HepG2 (cell line): ENCODE measurements at regions of chr2 and their contacts with region 1.

Region 1: DNA sequence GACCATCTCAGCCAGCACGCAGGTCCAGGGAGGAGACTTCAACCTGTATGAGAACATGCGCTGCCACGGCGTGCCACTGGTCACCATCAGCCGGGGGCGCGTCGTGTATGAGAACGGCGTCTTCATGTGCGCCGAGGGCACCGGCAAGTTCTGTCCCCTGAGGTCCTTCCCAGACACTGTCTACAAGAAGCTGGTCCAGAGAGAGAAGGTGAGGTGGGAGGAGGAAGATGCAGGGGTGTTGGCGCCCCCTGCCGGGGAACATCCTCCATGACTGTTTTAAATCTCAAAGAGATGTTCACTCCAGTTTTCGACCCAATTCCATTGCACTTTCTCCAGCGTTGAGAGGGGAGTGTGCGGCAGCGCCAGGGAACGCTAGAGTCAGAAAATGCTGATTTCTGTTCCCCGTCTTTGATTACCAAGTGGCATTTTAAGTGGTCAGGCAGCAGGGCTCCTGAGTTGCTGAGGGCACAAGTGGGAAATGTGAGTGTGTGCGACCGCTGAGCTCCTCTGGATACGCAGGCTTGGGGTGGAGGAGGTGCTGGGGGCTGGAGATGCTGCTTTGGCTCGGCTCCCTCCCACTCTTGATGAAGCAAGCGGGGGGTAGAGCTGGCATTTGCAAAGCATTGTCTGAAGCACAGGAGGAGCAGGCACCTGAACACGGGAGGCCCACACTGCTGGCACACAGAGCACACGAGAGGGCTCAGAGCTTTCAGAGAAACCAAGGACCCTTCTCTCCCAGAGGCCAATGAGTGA is 27.7 kb upstream of the MAPRE3 start:
- DNase-seq: peak; percentile 53
- ATAC-seq: peak; percentile 62
- H3K4me3 ChIP-seq: peak overlapping the region in 1 of 3 experiments; percentile 24; a peak in 1 of 6 replicates
- H3K27ac ChIP-seq: no peak overlapping the region
- H3K4me1 ChIP-seq: peaks cover 23% of the 10 kb centered on the region
- H3K27me3 ChIP-seq: peaks cover 10 to 65% of the 10 kb centered on the region in 2 experiments
- CTCF ChIP-seq: peak; percentile 97
- EP300 ChIP-seq: no peak
- POLR2A ChIP-seq: no peak
- RAD21 ChIP-seq: peak; percentile 88

Region 2: GRCh38 chr2:26846328-26847306 is 96.1 kb before region 1 on chr2:
- CTCF ChIA-PET with region 1: interaction called, 80 read pairs
- POLR2A ChIA-PET with region 1: interaction called, 5 read pairs
- in situ Hi-C with region 1: loop called (anchors 5 kb)
- intact Hi-C with region 1: loop called (anchors 1 kb)
- DNase-seq: peak; percentile 61
- ATAC-seq: peak; percentile 76
- H3K4me3 ChIP-seq: 0 out of 6 replicates have a peak overlapping the region, but pooled peaks of 2 of the 3 experiments have one; percentile 11 to 29
- H3K27ac ChIP-seq: no peak overlapping the region
- H3K4me1 ChIP-seq: peaks cover 13% of the 10 kb centered on the region
- H3K27me3 ChIP-seq: peaks cover 21 to 81% of the 10 kb centered on the region in 2 experiments
- CTCF ChIP-seq: peak; percentile 92
- EP300 ChIP-seq: no peak
- POLR2A ChIP-seq: no peak
- RAD21 ChIP-seq: peak; percentile 96

Region 3: GRCh38 chr2:26900831-26901321 is 41.8 kb before region 1 on chr2:
- CTCF ChIA-PET with region 1: no interaction called
- POLR2A ChIA-PET with region 1: no interaction called
- in situ Hi-C with region 1: no loop called
- intact Hi-C with region 1: loop called (anchors 1 kb)
- DNase-seq: no peak
- ATAC-seq: no peak
- H3K4me3 ChIP-seq: no peak overlapping the region
- H3K27ac ChIP-seq: no peak overlapping the region
- H3K4me1 ChIP-seq: no peaks in the 10 kb centered on the region
- H3K27me3 ChIP-seq: peaks cover 5 to 66% of the 10 kb centered on the region in 2 experiments
- CTCF ChIP-seq: no peak
- EP300 ChIP-seq: no peak
- POLR2A ChIP-seq: no peak
- RAD21 ChIP-seq: no peak

Region 4: DNA sequence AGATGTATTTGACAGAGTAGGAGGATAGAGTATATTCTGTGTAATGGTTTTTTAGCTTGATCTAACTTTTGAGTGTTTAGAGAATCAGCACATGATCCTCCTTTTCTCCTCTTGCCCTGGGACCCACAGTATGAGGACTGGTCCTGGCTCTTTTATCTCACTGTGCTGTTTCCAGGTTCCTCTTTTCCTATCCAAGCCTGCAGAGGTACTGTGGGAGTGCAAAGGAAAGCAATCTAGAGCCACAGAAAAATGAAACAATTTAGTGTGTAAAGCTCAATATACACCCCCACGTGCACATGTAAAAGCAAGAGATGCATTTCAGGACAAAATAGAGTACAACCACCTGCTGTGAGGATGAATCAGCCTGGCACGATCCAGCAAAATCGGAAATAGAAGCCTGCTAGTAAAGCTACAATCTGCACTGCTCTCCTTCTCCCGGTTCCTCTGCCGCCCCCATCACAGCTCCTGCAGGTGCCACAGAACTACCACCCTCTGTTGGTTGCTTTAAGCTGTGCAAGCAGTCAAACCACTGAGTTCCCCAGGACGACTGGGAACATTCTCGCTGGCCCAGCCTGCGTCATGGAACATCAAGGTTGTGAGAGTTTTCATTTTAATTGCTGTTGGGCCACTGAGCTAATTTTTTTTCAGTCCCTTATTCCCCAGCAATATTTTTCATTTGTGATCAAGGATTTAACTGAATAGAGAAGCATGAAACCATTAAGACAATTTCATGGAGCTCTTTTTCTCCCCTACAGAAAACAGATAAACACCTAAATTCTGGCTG is 20.1 kb before region 1 on chr2:
- CTCF ChIA-PET with region 1: interaction called, 4 read pairs
- POLR2A ChIA-PET with region 1: interaction called, 6 read pairs
- in situ Hi-C with region 1: no loop called
- intact Hi-C with region 1: loop called (anchors 1 kb)
- DNase-seq: peak; percentile 69
- ATAC-seq: peak; percentile 81
- H3K4me3 ChIP-seq: no peak overlapping the region; a peak in 1 of 6 replicates
- H3K27ac ChIP-seq: no peak overlapping the region
- H3K4me1 ChIP-seq: peaks cover 49% of the 10 kb centered on the region
- H3K27me3 ChIP-seq: peaks cover 0 to 26% of the 10 kb centered on the region in 2 experiments; a peak in 2 of 5 replicates
- CTCF ChIP-seq: peak; percentile 86
- EP300 ChIP-seq: no peak
- POLR2A ChIP-seq: no peak
- RAD21 ChIP-seq: peak; percentile 74

Region 5: GRCh38 chr2:26970244-26970920 is 27.7 kb after region 1 on chr2 and contains the start of gene MAPRE3:
- CTCF ChIA-PET with region 1: no interaction called
- POLR2A ChIA-PET with region 1: no interaction called
- in situ Hi-C with region 1: no loop called
- intact Hi-C with region 1: no loop called
- DNase-seq: peak; percentile 51
- ATAC-seq: peak; percentile 94
- H3K4me3 ChIP-seq: peak within 1 kb of the TSS; percentile 48 to 75 (median 61); a peak in 5 of 6 replicates
- H3K27ac ChIP-seq: no peak within 1 kb of the TSS
- H3K4me1 ChIP-seq: peaks cover 13% of the 10 kb centered on the region
- H3K27me3 ChIP-seq: peaks cover 0 to 56% of the 10 kb centered on the region in 2 experiments; a peak in 4 of 5 replicates
- CTCF ChIP-seq: no peak
- EP300 ChIP-seq: no peak
- POLR2A ChIP-seq: no peak
- RAD21 ChIP-seq: no peak
- total RNA-seq, gene MAPRE3: 0.20 and 0.31 TPM in 2 replicates

Region 6: DNA sequence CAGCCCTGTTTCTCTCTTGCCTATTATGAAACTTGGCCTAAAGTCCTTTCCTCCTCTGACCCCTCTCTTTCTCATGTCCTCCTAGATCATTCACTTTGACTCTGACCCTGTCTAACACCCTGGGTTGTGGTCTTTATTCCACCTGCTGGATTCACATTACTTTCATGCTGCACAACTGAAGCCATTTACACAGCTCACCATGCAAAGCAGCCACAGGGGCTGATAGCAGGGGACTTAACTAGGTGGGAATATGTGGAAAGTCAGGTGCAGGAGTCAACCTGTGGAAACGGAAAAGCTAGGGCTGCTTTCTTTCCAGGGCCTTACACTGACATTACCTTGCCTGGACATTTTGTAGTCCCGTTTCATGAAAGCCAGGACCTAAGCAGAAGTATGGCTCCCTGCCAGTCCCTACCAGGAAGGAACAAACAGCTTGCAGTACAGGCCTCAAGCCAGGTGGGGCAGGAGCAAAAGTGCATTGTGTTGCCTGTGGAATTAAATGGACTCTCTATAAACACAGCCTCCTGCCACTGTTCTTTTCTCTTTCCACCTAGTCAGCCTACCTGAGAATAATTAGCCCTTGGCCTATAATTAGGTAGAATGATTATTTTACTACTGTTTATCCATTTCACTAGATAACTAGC is 39.5 kb after region 1 on chr2:
- CTCF ChIA-PET with region 1: no interaction called
- POLR2A ChIA-PET with region 1: no interaction called
- in situ Hi-C with region 1: no loop called
- intact Hi-C with region 1: no loop called
- DNase-seq: peak; percentile 78
- ATAC-seq: peak; percentile 99
- H3K4me3 ChIP-seq: no peak overlapping the region; a peak in 1 of 6 replicates
- H3K27ac ChIP-seq: no peak overlapping the region
- H3K4me1 ChIP-seq: peaks cover 14% of the 10 kb centered on the region
- H3K27me3 ChIP-seq: no peaks in the 10 kb centered on the region
- CTCF ChIP-seq: peak; percentile 60
- EP300 ChIP-seq: no peak
- POLR2A ChIP-seq: no peak
- RAD21 ChIP-seq: no peak